Aorta (tissue), 5 donors: ENCODE measurements at regions of chr6 and their contacts with region 1.

Region 1: GRCh38 chr6:2448820-2449571 is 203.6 kb upstream of the GMDS start:
- DNase-seq: no peak
- ATAC-seq: peak; percentile 86
- H3K4me3 ChIP-seq: peak overlapping the region in 1 of 2 donors; percentile 23
- H3K27ac ChIP-seq: peak overlapping the region in 1 of 2 donors; percentile 45
- H3K4me1 ChIP-seq: peaks cover 0 to 3% of the 10 kb centered on the region in 2 donors
- H3K27me3 ChIP-seq: no peaks in the 10 kb centered on the region

Region 2: GRCh38 chr6:1604158-1605030 is 844.6 kb before region 1 on chr6:
- intact Hi-C with region 1: loop called (anchors 1 to 2 kb)
- DNase-seq: peak; percentile 82 to 95
- ATAC-seq: peak; percentile 89
- H3K4me3 ChIP-seq: peak overlapping the region; percentile 48 to 55
- H3K27ac ChIP-seq: peak overlapping the region; percentile 94 to 100
- H3K4me1 ChIP-seq: no peaks in the 10 kb centered on the region
- H3K27me3 ChIP-seq: no peaks in the 10 kb centered on the region

Region 3: DNA sequence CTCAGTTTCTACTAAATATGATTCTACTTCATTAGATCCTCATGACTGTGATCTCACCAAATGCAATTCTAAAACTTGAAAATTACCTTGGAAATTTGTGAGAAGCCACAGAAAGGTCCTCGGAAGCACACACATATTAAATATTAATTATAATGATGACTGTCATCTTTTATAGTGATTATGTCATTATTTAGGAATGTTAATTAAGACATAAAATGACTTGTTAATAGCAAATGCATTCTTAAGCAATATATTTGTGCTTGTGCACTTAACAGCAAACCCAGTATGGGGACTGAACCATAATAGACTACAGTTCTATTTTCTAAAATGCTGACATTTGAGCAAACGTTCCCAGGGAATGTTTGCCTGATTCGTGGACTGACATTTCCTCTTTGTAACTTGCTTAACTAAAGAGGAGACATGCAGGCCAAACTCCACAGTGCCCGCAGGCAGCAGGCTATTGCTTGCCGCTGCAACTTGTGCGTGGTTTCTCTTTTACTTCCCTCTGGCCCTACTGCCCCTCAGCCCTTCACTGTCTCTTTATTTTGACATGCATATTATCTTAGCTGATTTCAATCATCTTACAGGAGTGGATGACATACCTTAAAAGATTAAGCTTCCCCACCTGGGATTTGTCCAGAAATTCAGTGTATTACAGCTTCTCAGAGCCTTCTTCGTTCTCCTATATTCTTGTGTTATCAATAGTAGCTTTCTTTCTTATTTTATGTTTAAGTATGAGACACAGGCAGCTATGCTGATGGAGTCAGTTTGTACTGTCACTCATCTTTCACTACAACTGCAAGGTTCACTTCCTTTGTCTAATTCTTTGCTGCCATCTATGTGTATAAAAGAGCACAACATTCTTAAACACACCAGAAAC is 345.1 kb before region 1 on chr6:
- intact Hi-C with region 1: loop called (anchors 5 to 10 kb)
- DNase-seq: peak in 1 of 2 donors; percentile 63
- ATAC-seq: peak; percentile 87
- H3K4me3 ChIP-seq: peak overlapping the region; percentile 61 to 94
- H3K27ac ChIP-seq: peak overlapping the region; percentile 84 to 90
- H3K4me1 ChIP-seq: no peaks in the 10 kb centered on the region
- H3K27me3 ChIP-seq: no peaks in the 10 kb centered on the region

Region 4: GRCh38 chr6:2221726-2222274 is 227.2 kb before region 1 on chr6:
- intact Hi-C with region 1: loop called in 1 of 2 experiments (anchors 10 kb)
- DNase-seq: no peak
- ATAC-seq: no peak
- H3K4me3 ChIP-seq: peak overlapping the region; percentile 28 to 54
- H3K27ac ChIP-seq: no peak overlapping the region
- H3K4me1 ChIP-seq: peaks cover 2 to 3% of the 10 kb centered on the region in 2 donors
- H3K27me3 ChIP-seq: no peaks in the 10 kb centered on the region

Region 5: GRCh38 chr6:2353412-2354137 is 95.4 kb before region 1 on chr6:
- intact Hi-C with region 1: loop called in 1 of 2 experiments (anchors 5 kb)
- DNase-seq: peak; percentile 66 to 83
- ATAC-seq: peak; percentile 89
- H3K4me3 ChIP-seq: no peak overlapping the region
- H3K27ac ChIP-seq: peak overlapping the region; percentile 61 to 93
- H3K4me1 ChIP-seq: peaks cover 0 to 6% of the 10 kb centered on the region in 2 donors
- H3K27me3 ChIP-seq: no peaks in the 10 kb centered on the region

Region 6: DNA sequence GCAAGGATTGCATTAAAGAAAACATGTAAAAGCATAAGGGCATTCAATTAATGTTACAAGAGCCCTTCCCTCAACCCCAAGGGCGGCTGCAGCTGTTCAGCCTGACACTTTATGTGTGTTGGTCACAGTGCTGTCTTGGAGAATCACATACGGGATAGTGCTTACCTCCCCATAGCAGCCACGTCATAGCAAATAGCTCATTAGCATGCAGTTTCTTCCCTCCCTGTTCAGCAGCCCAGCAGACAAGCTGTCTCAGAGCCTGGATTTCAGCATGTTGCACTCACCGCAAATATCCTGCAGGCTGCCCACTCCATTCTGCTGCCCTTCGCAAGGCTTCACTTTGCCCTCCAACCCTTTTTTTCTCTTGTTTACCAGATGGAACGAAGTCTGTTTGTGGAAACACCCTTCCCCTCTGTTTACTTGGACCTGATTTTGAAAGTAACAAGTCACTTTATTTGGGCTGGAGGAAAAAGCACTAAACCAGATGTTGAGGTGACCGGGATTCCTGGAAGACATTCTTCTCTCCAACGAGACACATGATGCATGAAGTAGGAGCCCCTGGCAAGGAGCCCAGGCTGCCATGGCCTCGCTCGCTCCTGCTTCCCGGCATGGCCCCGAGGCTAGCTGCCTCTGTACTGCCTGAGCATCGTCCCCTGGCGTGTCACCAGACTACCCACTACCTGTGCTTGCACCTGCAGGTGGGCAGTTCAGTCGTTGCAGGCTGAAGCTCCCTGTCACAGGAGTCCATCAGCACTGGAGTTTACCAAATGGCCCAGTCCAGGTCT is 52.0 kb before region 1 on chr6:
- intact Hi-C with region 1: no loop called
- DNase-seq: peak; percentile 74 to 84
- ATAC-seq: no peak
- H3K4me3 ChIP-seq: no peak overlapping the region
- H3K27ac ChIP-seq: peak overlapping the region in 1 of 2 donors; percentile 13
- H3K4me1 ChIP-seq: no peaks in the 10 kb centered on the region
- H3K27me3 ChIP-seq: no peaks in the 10 kb centered on the region

Region 7: GRCh38 chr6:2622671-2623070 is 173.7 kb after region 1 on chr6:
- intact Hi-C with region 1: loop called in 1 of 2 experiments (anchors 5 kb)
- DNase-seq: peak; percentile 86
- ATAC-seq: peak; percentile 70
- H3K4me3 ChIP-seq: no peak overlapping the region
- H3K27ac ChIP-seq: peak overlapping the region; percentile 91 to 94
- H3K4me1 ChIP-seq: peaks cover 5 to 13% of the 10 kb centered on the region in 2 donors
- H3K27me3 ChIP-seq: no peaks in the 10 kb centered on the region

Region 8: GRCh38 chr6:2714111-2714895 is 265.3 kb after region 1 on chr6:
- intact Hi-C with region 1: no loop called
- DNase-seq: no peak
- ATAC-seq: peak; percentile 41
- H3K4me3 ChIP-seq: no peak overlapping the region
- H3K27ac ChIP-seq: no peak overlapping the region
- H3K4me1 ChIP-seq: no peaks in the 10 kb centered on the region
- H3K27me3 ChIP-seq: peaks cover 0 to 1% of the 10 kb centered on the region in 2 donors